Naive thymus-derived CD4-positive, alpha-beta T cell (primary cell): ENCODE measurements at regions of chr17 and their contacts with region 1.

Region 1: GRCh38 chr17:59762513-59763374 is 55.3 kb downstream of the VMP1 start:
- DNase-seq: no peak
- ATAC-seq: no peak
- H3K4me3 ChIP-seq: no peak overlapping the region
- H3K4me3 Mint-ChIP-seq: peak overlapping the region in 2 of 10 donors; percentile 3 to 61
- H3K27ac ChIP-seq: peak overlapping the region; percentile 35
- H3K27ac Mint-ChIP-seq: peak overlapping the region in 5 of 9 donors; percentile 29 to 87 (median 43)
- H3K4me1 ChIP-seq: no peaks in the 10 kb centered on the region
- H3K4me1 Mint-ChIP-seq: peaks cover 5 to 53% (median 11%) of the 10 kb centered on the region in 7 donors
- H3K27me3 ChIP-seq: no peaks in the 10 kb centered on the region
- H3K27me3 Mint-ChIP-seq: no peaks in the 10 kb centered on the region

Region 2: GRCh38 chr17:59815965-59816364 is 53.2 kb after region 1 on chr17:
- CTCF ChIA-PET with region 1: no interaction called
- POLR2A ChIA-PET with region 1: no interaction called
- intact Hi-C with region 1: no loop called
- DNase-seq: no peak
- ATAC-seq: no peak
- H3K4me3 ChIP-seq: no peak overlapping the region
- H3K4me3 Mint-ChIP-seq: no peak overlapping the region
- H3K27ac ChIP-seq: no peak overlapping the region
- H3K27ac Mint-ChIP-seq: no peak overlapping the region
- H3K4me1 ChIP-seq: peaks cover 0 to 9% of the 10 kb centered on the region in 2 donors
- H3K4me1 Mint-ChIP-seq: peaks cover 0 to 34% (median 8%) of the 10 kb centered on the region in 7 donors
- H3K27me3 ChIP-seq: no peaks in the 10 kb centered on the region
- H3K27me3 Mint-ChIP-seq: no peaks in the 10 kb centered on the region

Region 3: GRCh38 chr17:59829217-59830006 is 66.7 kb after region 1 on chr17:
- CTCF ChIA-PET with region 1: no interaction called
- POLR2A ChIA-PET with region 1: no interaction called
- intact Hi-C with region 1: loop called in 1 of 2 experiments (anchors 1 kb)
- DNase-seq: peak in 1 of 9 donors; percentile 51
- ATAC-seq: peak; percentile 89
- H3K4me3 ChIP-seq: no peak overlapping the region
- H3K4me3 Mint-ChIP-seq: peak overlapping the region in 2 of 10 donors; percentile 61 to 86
- H3K27ac ChIP-seq: peak overlapping the region; percentile 50
- H3K27ac Mint-ChIP-seq: peak overlapping the region; percentile 49 to 97 (median 69)
- H3K4me1 ChIP-seq: peaks cover 14 to 46% of the 10 kb centered on the region in 2 donors
- H3K4me1 Mint-ChIP-seq: peaks cover 19 to 81% (median 43%) of the 10 kb centered on the region in 7 donors
- H3K27me3 ChIP-seq: no peaks in the 10 kb centered on the region
- H3K27me3 Mint-ChIP-seq: no peaks in the 10 kb centered on the region

Region 4: GRCh38 chr17:60781880-60782412 is 1019.2 kb after region 1 on chr17:
- CTCF ChIA-PET with region 1: no interaction called
- POLR2A ChIA-PET with region 1: no interaction called
- intact Hi-C with region 1: no loop called
- DNase-seq: no peak
- ATAC-seq: no peak
- H3K4me3 ChIP-seq: no peak overlapping the region
- H3K4me3 Mint-ChIP-seq: no peak overlapping the region
- H3K27ac ChIP-seq: no peak overlapping the region
- H3K27ac Mint-ChIP-seq: no peak overlapping the region
- H3K4me1 ChIP-seq: no peaks in the 10 kb centered on the region
- H3K4me1 Mint-ChIP-seq: peaks cover 0 to 4% (median 0%) of the 10 kb centered on the region in 7 donors
- H3K27me3 ChIP-seq: no peaks in the 10 kb centered on the region
- H3K27me3 Mint-ChIP-seq: no peaks in the 10 kb centered on the region